Dorsolateral prefrontal cortex (tissue), 120 donors: ENCODE measurements at regions of chr13 and their contacts with region 1.

Region 1: GRCh38 chr13:27171827-27172494 is 350 bp upstream of the USP12 start:
- DNase-seq: peak; percentile 74 to 93 (median 84)
- H3K4me3 ChIP-seq: peak overlapping the region; percentile 62 to 97 (median 84)
- H3K27ac ChIP-seq: peak overlapping the region in 58 of 59 donors; percentile 65 to 98 (median 93)
- H3K27me3 ChIP-seq: no peaks in the 10 kb centered on the region
- CTCF ChIP-seq: peak in 47 of 56 donors; percentile 15 to 69 (median 43)

Region 2: DNA sequence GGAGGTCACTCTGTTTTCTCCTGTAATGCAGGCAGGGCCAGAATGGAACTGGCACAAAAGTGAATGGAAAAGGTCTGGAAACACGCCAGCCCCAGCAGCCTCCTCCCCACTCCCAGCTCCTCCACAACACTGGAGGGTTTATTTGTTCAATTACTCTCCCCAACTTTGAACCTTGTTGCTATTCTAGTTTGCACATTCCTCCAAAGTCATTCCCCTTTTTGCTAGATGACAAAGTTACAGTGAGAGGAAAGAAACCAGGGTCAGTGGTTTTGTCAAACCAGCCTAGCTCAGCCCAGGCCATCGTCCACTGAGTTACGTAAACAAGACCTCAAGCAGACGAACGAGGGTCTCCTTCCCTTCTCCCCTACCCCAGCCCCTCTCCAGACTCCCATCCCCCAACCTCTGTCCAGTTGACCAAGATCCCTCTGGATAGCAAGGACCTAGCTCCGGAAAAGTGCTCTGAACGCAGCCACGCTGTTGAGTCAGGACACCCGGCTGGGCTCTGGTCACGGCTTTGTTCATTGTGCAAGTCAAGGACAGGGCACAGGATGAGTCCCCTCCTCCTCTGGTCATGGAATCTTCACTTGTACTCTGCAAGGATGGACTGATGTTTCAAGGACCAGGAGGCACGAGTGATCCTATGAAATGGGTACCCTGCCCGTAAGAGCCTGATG is 180.3 kb before region 1 on chr13:
- intact Hi-C with region 1: loop called (anchors 5 kb)
- DNase-seq: peak in 9 of 10 donors; percentile 57 to 81 (median 68)
- H3K4me3 ChIP-seq: peak overlapping the region in 40 of 59 donors; percentile 6 to 52 (median 29)
- H3K27ac ChIP-seq: peak overlapping the region in 58 of 59 donors; percentile 58 to 98 (median 90)
- H3K27me3 ChIP-seq: no peaks in the 10 kb centered on the region
- CTCF ChIP-seq: peak in 4 of 56 donors; percentile 5 to 13 (median 11)

Region 3: GRCh38 chr13:27043013-27043412 is 128.9 kb before region 1 on chr13:
- intact Hi-C with region 1: loop called (anchors 5 to 10 kb)
- DNase-seq: peak; percentile 37 to 88 (median 80)
- H3K4me3 ChIP-seq: peak overlapping the region in 5 of 59 donors; percentile 3 to 25 (median 16)
- H3K27ac ChIP-seq: peak overlapping the region in 47 of 59 donors; percentile 0 to 81 (median 54)
- H3K27me3 ChIP-seq: no peaks in the 10 kb centered on the region
- CTCF ChIP-seq: peak in 50 of 56 donors; percentile 13 to 76 (median 44)

Region 4: GRCh38 chr13:27117158-27117557 is 54.8 kb before region 1 on chr13:
- intact Hi-C with region 1: no loop called
- DNase-seq: no peak
- H3K4me3 ChIP-seq: no peak overlapping the region
- H3K27ac ChIP-seq: peak overlapping the region in 1 of 59 donors; percentile 54
- H3K27me3 ChIP-seq: no peaks in the 10 kb centered on the region
- CTCF ChIP-seq: no peak

Region 5: GRCh38 chr13:27251166-27252091 is 79.5 kb after region 1 on chr13 and contains the start of gene RPL21:
- intact Hi-C with region 1: loop called (anchors 5 kb)
- DNase-seq: peak; percentile 89 to 97 (median 96)
- H3K4me3 ChIP-seq: peak within 1 kb of the TSS; percentile 69 to 100 (median 94)
- H3K27ac ChIP-seq: peak within 1 kb of the TSS; percentile 85 to 100 (median 98)
- H3K27me3 ChIP-seq: no peaks in the 10 kb centered on the region
- CTCF ChIP-seq: peak in 22 of 56 donors; percentile 5 to 47 (median 23)
- total RNA-seq, gene RPL21: 253 to 573 (median 415) TPM

Region 6: GRCh38 chr13:27270594-27271520 is 98.9 kb after region 1 on chr13 and contains the start of gene RASL11A:
- intact Hi-C with region 1: loop called (anchors 5 kb)
- DNase-seq: peak; percentile 71 to 90 (median 83)
- H3K4me3 ChIP-seq: peak within 1 kb of the TSS; percentile 63 to 96 (median 89)
- H3K27ac ChIP-seq: peak within 1 kb of the TSS; percentile 32 to 97 (median 91)
- H3K27me3 ChIP-seq: no peaks in the 10 kb centered on the region
- CTCF ChIP-seq: peak in 55 of 56 donors; percentile 71 to 97 (median 89)
- total RNA-seq, gene RASL11A: 1.2 to 14.3 (median 5.2) TPM